Activated T-helper 2 cell treated with anti-CD3 and anti-CD28 coated beads, Interferon-gamma antibody, Interleukin-2, Interleukin-4, amounts not matched to agents 10 μg/mL and 5 μg/mL and 100 μg/mL, durations not matched to agents 14 hours and 24 hours and 36 hours (primary cell): ENCODE measurements at regions of chr19 and their contacts with region 1.

Region 1: DNA sequence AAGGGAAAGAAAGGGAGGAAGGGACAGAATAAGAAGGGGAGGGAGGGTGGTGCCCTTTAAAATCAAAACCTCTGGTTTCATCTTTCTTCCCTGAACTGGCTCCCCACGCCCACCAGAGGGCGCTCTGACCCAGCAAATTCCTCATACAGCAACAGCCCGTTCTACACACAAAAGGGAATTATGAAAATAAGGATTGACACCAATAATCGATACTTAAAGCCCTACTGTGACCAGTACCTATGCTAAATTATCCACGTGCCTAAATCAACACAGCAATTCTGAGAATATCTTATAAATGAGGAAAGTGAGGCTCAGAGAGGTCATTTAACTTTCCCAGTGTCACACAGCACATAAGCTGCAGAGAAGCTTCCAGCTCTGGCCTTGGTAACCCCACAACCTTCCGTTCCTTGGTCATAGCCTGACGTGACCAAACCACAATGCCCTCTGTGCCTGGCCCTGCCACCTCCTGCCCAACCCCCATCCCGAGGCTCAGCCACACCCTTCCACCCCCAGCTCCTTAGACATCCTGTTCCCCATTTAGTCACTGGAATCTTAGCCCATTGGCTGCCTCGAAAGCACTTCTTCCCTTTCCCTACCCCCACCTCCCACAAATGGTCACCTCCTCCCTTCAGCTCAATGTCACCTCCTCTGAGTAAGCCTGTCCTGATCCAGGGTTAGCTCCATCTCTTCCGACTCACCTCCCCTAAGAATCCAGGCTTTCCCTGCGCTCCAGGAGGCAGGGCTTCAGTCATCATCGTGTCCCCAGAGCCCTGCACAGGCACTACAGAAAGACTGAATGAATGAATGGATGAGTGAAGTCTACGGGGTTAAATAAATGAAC is 34.2 kb upstream of the PNMA8B start:
- DNase-seq: peak; percentile 57
- H3K4me3 Mint-ChIP-seq: no peak overlapping the region
- H3K27ac Mint-ChIP-seq: no peak overlapping the region
- H3K4me1 Mint-ChIP-seq: peaks cover 14% of the 10 kb centered on the region
- H3K27me3 Mint-ChIP-seq: peaks cover under 1% of the 10 kb centered on the region

Region 2: DNA sequence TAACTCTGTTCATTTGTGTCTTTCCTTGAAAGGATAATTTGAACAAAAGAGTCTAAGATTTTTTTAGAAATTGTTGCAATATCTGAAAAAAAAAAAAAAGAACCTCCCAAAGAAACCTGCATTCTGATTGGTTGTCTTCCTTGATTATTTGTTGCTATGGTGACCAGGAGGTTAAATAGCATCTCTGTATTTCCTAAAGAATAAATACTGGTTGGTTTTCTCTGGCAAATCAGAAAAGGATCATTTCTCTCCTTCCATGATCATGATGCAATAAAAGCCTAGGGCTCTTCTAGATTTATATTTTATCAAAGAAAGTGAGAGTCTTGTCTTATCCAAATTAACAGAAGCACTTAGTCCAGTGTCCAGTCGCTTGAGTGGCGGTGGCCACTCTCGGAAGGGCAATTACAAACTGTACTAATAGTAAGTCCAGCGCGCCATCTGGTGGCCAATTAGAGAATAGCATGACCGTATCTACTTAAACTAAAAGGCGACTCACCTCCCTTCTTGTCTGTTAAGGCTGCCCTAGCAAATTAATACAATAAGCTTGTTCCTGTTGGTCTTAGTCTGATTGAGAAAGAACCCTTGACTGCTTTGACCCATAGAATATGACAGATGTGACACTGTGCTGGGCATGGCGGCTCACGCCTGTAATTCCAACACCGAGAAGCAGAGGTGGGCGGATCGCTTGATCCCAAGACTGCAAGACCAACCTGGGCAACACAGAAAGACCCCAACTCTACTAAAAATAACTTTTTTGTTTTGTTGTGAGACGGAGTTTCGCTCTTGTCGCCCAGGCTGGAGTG is 12.8 kb after region 1 on chr19:
- intact Hi-C with region 1: loop called (anchors 1 kb)
- DNase-seq: peak; percentile 63
- H3K4me3 Mint-ChIP-seq: no peak overlapping the region
- H3K27ac Mint-ChIP-seq: no peak overlapping the region
- H3K4me1 Mint-ChIP-seq: peaks cover 6% of the 10 kb centered on the region
- H3K27me3 Mint-ChIP-seq: peaks cover 11% of the 10 kb centered on the region

Region 3: DNA sequence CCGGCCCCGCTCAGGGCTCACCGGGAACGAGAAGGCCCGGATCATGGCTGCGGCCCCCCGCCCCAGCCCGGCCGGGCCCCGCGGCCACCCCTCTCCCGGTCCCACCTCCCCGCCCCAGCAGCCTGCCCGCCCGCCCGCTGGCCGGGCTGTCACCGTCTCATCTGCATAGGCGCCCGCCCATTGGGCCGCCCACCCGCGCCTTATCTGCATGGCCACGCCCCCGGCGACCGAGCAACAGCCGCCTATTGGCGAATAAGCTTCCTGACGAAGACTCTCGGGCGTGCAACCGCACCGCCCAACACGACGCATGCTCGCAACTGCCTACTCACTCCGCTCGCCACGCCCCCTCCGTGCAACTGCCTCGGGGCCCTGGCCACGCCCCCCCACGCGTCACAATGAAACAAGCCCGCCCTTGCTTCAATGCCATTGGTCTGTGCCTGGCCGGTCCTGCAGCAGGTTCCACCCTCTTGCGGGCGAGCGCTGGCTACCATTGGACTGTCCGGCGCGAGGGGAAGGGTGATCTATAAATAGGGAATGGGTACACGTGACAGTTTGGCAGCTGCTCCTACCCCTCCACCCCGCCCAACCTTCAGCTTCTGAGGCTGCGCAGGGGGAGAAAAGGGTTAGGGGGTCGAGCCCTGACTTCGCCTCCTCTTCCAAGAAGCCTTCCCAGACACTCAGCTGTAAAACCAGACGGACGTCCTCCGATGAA is 131.3 kb after region 1 on chr19 and contains the start of gene DACT3:
- intact Hi-C with region 1: loop called (anchors 1 kb)
- DNase-seq: peak; percentile 100
- H3K4me3 Mint-ChIP-seq: peak within 1 kb of the TSS; percentile 81
- H3K27ac Mint-ChIP-seq: peak within 1 kb of the TSS; percentile 80
- H3K4me1 Mint-ChIP-seq: peaks cover 19% of the 10 kb centered on the region
- H3K27me3 Mint-ChIP-seq: peaks cover 26% of the 10 kb centered on the region
- total RNA-seq, gene DACT3: 6.1 and 6.5 TPM in 2 replicates

Region 4: GRCh38 chr19:46753420-46754155 is 223.7 kb after region 1 on chr19:
- intact Hi-C with region 1: loop called (anchors 5 kb)
- DNase-seq: peak; percentile 67
- H3K4me3 Mint-ChIP-seq: no peak overlapping the region
- H3K27ac Mint-ChIP-seq: no peak overlapping the region
- H3K4me1 Mint-ChIP-seq: peaks cover 5% of the 10 kb centered on the region
- H3K27me3 Mint-ChIP-seq: no peaks in the 10 kb centered on the region

Region 5: GRCh38 chr19:46821498-46822409 is 291.9 kb after region 1 on chr19:
- intact Hi-C with region 1: no loop called
- DNase-seq: peak; percentile 49
- H3K4me3 Mint-ChIP-seq: peak overlapping the region; percentile 5
- H3K27ac Mint-ChIP-seq: peak overlapping the region; percentile 46
- H3K4me1 Mint-ChIP-seq: peaks cover 37% of the 10 kb centered on the region
- H3K27me3 Mint-ChIP-seq: no peaks in the 10 kb centered on the region